ENCODE measurements at regions of chr12 and their contacts with region 1.

Region 1: GRCh38 chr12:15546102-15546701 is 223.9 kb downstream of the PTPRO start:
- DNase-seq: peak; percentile 17
- ATAC-seq: peak; percentile 62
- H3K4me3 Mint-ChIP-seq: peak overlapping the region; percentile 20
- H3K27ac Mint-ChIP-seq: peak overlapping the region; percentile 86
- H3K4me1 Mint-ChIP-seq: peaks cover 35% of the 10 kb centered on the region
- H3K27me3 Mint-ChIP-seq: no peaks in the 10 kb centered on the region
- CTCF ChIP-seq: no peak

Region 2: DNA sequence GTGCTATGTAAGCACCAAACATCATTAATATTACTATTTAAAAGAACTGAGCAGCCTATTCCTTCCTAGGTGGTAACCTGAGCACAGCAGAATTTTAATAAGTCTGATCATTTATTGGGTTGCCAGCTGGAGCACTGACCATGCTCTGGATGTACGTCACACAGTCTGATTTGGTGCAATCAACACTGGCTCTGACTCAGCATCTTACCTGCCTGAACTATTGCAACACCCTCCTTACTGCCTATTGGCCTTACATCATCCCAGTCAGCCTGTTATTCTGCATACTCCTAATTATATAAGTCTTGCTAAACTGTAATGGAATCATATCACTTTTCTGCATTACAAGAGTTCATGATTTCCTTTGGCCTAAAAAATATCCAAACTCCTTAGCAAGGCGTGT is 74.2 kb before region 1 on chr12:
- CTCF ChIA-PET with region 1: no interaction called
- POLR2A ChIA-PET with region 1: no interaction called
- intact Hi-C with region 1: no loop called
- DNase-seq: no peak
- ATAC-seq: no peak
- H3K4me3 Mint-ChIP-seq: no peak overlapping the region
- H3K27ac Mint-ChIP-seq: no peak overlapping the region
- H3K4me1 Mint-ChIP-seq: no peaks in the 10 kb centered on the region
- H3K27me3 Mint-ChIP-seq: peaks cover 12% of the 10 kb centered on the region
- CTCF ChIP-seq: no peak

Region 3: GRCh38 chr12:15526033-15526432 is 20.2 kb before region 1 on chr12:
- CTCF ChIA-PET with region 1: no interaction called
- POLR2A ChIA-PET with region 1: no interaction called
- intact Hi-C with region 1: no loop called
- DNase-seq: no peak
- ATAC-seq: peak; percentile 51
- H3K4me3 Mint-ChIP-seq: no peak overlapping the region
- H3K27ac Mint-ChIP-seq: no peak overlapping the region
- H3K4me1 Mint-ChIP-seq: no peaks in the 10 kb centered on the region
- H3K27me3 Mint-ChIP-seq: peaks cover 7% of the 10 kb centered on the region
- CTCF ChIP-seq: no peak

Region 4: GRCh38 chr12:15563663-15564062 is 17.5 kb after region 1 on chr12:
- CTCF ChIA-PET with region 1: interaction called, 21 read pairs
- POLR2A ChIA-PET with region 1: interaction called, 5 read pairs
- intact Hi-C with region 1: no loop called
- DNase-seq: peak; percentile 54
- ATAC-seq: peak; percentile 83
- H3K4me3 Mint-ChIP-seq: peak overlapping the region; percentile 54
- H3K27ac Mint-ChIP-seq: peak overlapping the region; percentile 90
- H3K4me1 Mint-ChIP-seq: peaks cover 47% of the 10 kb centered on the region
- H3K27me3 Mint-ChIP-seq: no peaks in the 10 kb centered on the region
- CTCF ChIP-seq: no peak

Region 5: GRCh38 chr12:15621140-15621539 is 74.9 kb after region 1 on chr12:
- CTCF ChIA-PET with region 1: no interaction called
- POLR2A ChIA-PET with region 1: no interaction called
- intact Hi-C with region 1: no loop called
- DNase-seq: no peak
- ATAC-seq: no peak
- H3K4me3 Mint-ChIP-seq: no peak overlapping the region
- H3K27ac Mint-ChIP-seq: no peak overlapping the region
- H3K4me1 Mint-ChIP-seq: no peaks in the 10 kb centered on the region
- H3K27me3 Mint-ChIP-seq: peaks cover 5% of the 10 kb centered on the region
- CTCF ChIP-seq: no peak

Measured in activated CD8-positive, alpha-beta T cell treated with anti-CD3 and anti-CD28 coated beads for 36 hours (primary cell).